CD8-positive, alpha-beta T cell (primary cell): ENCODE measurements at regions of chr15 and their contacts with region 1.

Region 1: DNA sequence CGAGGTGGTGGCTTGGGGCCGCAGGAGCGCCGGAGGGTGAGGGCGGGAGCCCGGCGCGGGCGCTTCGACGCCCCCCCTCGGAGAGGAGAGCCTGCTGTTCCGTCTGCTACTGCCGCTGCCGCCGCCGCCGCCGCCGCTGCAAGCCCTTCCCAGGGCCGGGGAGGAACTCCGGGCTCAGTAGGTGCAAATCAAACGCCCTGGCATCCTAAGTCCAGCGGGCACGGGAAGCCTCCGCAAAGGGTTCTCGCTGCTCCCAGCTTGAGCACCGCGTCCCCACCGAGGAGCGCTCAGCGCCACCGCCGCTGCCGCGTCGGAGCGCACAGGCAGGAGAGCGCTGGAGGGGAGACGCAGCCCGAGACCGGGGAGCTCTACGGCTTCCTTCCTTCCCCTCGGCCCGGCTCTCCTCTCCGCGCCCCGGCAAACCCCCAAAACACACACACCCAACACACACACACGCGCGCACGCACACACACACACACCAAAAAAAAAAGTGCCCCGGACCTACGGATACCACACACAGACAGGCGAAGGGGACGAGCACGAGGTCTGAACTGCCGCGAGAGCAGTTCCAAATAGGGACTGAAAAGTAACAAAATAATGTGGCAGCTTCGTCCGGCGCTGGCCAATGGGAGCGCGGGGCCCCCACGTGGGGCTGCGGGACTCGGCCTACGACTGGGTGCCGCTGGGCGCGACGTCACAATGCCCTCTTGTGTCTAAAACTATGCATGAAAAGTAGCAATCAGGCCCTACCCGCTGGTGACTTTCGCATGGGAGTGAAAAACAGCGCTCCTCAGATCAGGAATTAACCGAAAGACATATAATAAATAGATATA is at the start of gene TLE3:
- DNase-seq: peak; percentile 93 to 99 (median 98)
- ATAC-seq: peak; percentile 55
- H3K4me3 ChIP-seq: peak within 1 kb of the TSS; percentile 81 to 89
- H3K4me3 Mint-ChIP-seq: peak within 1 kb of the TSS; percentile 99
- H3K27ac ChIP-seq: peak within 1 kb of the TSS; percentile 90
- H3K27ac Mint-ChIP-seq: peak within 1 kb of the TSS; percentile 98
- H3K4me1 ChIP-seq: peaks cover 51% of the 10 kb centered on the region
- H3K4me1 Mint-ChIP-seq: peaks cover 53% of the 10 kb centered on the region
- H3K27me3 ChIP-seq: peaks cover 0 to 6% of the 10 kb centered on the region in 2 experiments
- H3K27me3 Mint-ChIP-seq: no peaks in the 10 kb centered on the region
- CTCF ChIP-seq: peak; percentile 35
- total RNA-seq, gene TLE3: 198 to 201 TPM

Region 2: GRCh38 chr15:69413822-69414700 is 683.5 kb before region 1 on chr15 and contains the start of gene KIF23:
- CTCF ChIA-PET with region 1: no interaction called
- POLR2A ChIA-PET with region 1: no interaction called
- intact Hi-C with region 1: loop called in 1 of 2 experiments (anchors 5 kb)
- DNase-seq: peak; percentile 81 to 97 (median 94)
- ATAC-seq: peak; percentile 98
- H3K4me3 ChIP-seq: peak within 1 kb of the TSS; percentile 72 to 75
- H3K4me3 Mint-ChIP-seq: peak within 1 kb of the TSS; percentile 88
- H3K27ac ChIP-seq: no peak within 1 kb of the TSS
- H3K27ac Mint-ChIP-seq: no peak within 1 kb of the TSS
- H3K4me1 ChIP-seq: peaks cover 7% of the 10 kb centered on the region
- H3K4me1 Mint-ChIP-seq: peaks cover 15% of the 10 kb centered on the region
- H3K27me3 ChIP-seq: peaks cover 2 to 5% of the 10 kb centered on the region in 2 experiments
- H3K27me3 Mint-ChIP-seq: peaks cover 21% of the 10 kb centered on the region
- CTCF ChIP-seq: no peak
- total RNA-seq, gene KIF23: 0.81 to 0.95 TPM

Region 3: GRCh38 chr15:69576035-69576526 is 521.5 kb before region 1 on chr15:
- CTCF ChIA-PET with region 1: interaction called, 5 read pairs
- POLR2A ChIA-PET with region 1: no interaction called
- intact Hi-C with region 1: loop called (anchors 5 kb)
- DNase-seq: peak; percentile 57 to 86 (median 70)
- ATAC-seq: peak; percentile 82
- H3K4me3 ChIP-seq: no peak overlapping the region
- H3K4me3 Mint-ChIP-seq: no peak overlapping the region
- H3K27ac ChIP-seq: no peak overlapping the region
- H3K27ac Mint-ChIP-seq: no peak overlapping the region
- H3K4me1 ChIP-seq: peaks cover 11% of the 10 kb centered on the region
- H3K4me1 Mint-ChIP-seq: peaks cover 21% of the 10 kb centered on the region
- H3K27me3 ChIP-seq: no peaks in the 10 kb centered on the region
- H3K27me3 Mint-ChIP-seq: no peaks in the 10 kb centered on the region
- CTCF ChIP-seq: peak; percentile 80

Region 4: GRCh38 chr15:69755551-69756310 is 341.8 kb before region 1 on chr15:
- CTCF ChIA-PET with region 1: interaction called, 4 read pairs
- POLR2A ChIA-PET with region 1: interaction called, 66 read pairs
- intact Hi-C with region 1: loop called (anchors 1 kb)
- DNase-seq: peak; percentile 16 to 89 (median 77)
- ATAC-seq: peak; percentile 70
- H3K4me3 ChIP-seq: peak overlapping the region; percentile 4 to 5
- H3K4me3 Mint-ChIP-seq: peak overlapping the region; percentile 58
- H3K27ac ChIP-seq: no peak overlapping the region
- H3K27ac Mint-ChIP-seq: peak overlapping the region; percentile 86
- H3K4me1 ChIP-seq: peaks cover 72% of the 10 kb centered on the region
- H3K4me1 Mint-ChIP-seq: peaks cover 75% of the 10 kb centered on the region
- H3K27me3 ChIP-seq: peaks cover 0 to 3% of the 10 kb centered on the region in 2 experiments
- H3K27me3 Mint-ChIP-seq: peaks cover 7% of the 10 kb centered on the region
- CTCF ChIP-seq: no peak

Region 5: DNA sequence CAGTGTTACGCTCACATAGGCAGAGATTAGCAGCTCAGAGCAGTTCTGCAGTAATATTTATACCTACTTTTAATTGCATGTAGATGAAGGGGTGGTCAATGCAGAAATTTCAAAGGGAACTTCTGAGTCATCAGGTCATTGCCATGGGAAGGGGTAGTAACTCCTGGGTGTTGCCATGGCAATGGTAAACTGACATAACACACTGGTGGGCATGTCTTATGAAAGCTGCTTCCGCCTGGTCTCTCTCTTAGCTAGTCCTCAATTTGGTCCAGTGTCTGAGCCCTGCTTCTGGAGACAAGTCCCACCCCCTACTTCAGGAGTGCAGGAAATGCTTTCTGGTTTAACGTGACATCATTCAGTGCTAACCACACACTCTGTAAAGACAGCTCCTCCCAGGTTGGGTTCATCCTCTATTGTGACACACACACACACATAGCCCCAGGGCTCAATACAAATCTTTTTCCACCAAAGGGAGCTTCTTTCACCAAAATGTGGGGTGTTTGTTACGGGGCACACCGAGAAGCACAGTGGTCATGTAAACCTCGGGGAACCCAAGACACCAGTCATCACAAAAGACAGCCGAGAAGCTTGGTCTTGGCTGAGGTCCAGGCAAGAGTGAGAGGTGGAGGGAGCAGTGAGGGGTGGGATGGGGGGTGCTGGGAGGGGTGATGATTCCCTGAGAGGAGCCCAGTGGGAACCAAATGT is 74.3 kb before region 1 on chr15:
- CTCF ChIA-PET with region 1: no interaction called
- POLR2A ChIA-PET with region 1: interaction called, 3 read pairs
- intact Hi-C with region 1: loop called (anchors 1 kb)
- DNase-seq: peak; percentile 24 to 94 (median 55)
- ATAC-seq: peak; percentile 98
- H3K4me3 ChIP-seq: no peak overlapping the region
- H3K4me3 Mint-ChIP-seq: peak overlapping the region; percentile 48
- H3K27ac ChIP-seq: peak overlapping the region in 1 of 2 experiments; percentile 43
- H3K27ac Mint-ChIP-seq: peak overlapping the region; percentile 84
- H3K4me1 ChIP-seq: peaks cover 13% of the 10 kb centered on the region
- H3K4me1 Mint-ChIP-seq: peaks cover 19% of the 10 kb centered on the region
- H3K27me3 ChIP-seq: no peaks in the 10 kb centered on the region
- H3K27me3 Mint-ChIP-seq: peaks cover 5% of the 10 kb centered on the region
- CTCF ChIP-seq: no peak

Region 6: GRCh38 chr15:70299931-70300869 is 202.6 kb after region 1 on chr15:
- CTCF ChIA-PET with region 1: no interaction called
- POLR2A ChIA-PET with region 1: interaction called, 4 read pairs
- intact Hi-C with region 1: loop called (anchors 1 to 5 kb)
- DNase-seq: peak; percentile 54 to 92 (median 71)
- ATAC-seq: peak; percentile 90
- H3K4me3 ChIP-seq: no peak overlapping the region
- H3K4me3 Mint-ChIP-seq: peak overlapping the region; percentile 44
- H3K27ac ChIP-seq: no peak overlapping the region
- H3K27ac Mint-ChIP-seq: peak overlapping the region; percentile 86
- H3K4me1 ChIP-seq: peaks cover 20% of the 10 kb centered on the region
- H3K4me1 Mint-ChIP-seq: peaks cover 18% of the 10 kb centered on the region
- H3K27me3 ChIP-seq: peaks cover 0 to 22% of the 10 kb centered on the region in 2 experiments
- H3K27me3 Mint-ChIP-seq: no peaks in the 10 kb centered on the region
- CTCF ChIP-seq: no peak